ENCODE measurements at regions of chr7 and their contacts with region 1.

Region 1: DNA sequence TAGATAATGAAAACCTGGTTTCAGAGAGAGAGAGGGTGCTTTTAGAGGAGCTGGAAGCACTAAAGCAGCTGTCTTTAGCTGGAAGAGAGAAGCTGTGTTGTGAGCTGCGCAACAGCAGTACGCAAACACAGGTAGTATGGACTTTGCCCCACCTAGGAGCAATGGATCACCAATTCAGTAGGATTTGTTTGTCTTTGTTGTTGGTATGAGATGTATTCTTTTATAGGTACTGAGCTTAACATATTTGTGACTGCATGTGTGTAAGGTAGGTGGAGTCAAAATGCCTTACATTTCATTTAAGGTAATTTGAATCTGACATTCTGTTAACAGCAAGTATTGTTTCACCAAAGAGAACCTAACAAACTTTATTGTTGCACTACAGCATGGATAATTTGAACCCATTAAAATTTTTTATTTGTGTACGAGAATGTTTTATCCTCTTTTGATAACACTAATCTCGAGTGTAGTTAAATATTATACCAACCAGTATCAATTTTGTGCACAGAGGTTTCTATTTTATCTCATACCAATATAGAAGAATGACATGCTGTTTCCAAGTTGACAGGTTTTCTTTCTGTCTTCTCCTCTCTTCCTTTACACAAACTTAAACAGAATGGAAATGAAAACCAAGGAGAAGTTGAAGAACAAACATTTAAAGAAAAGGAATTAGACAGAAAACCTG is 92.1 kb downstream of the CYP51A1 start:
- DNase-seq: no peak
- ATAC-seq: no peak
- H3K4me3 ChIP-seq: no peak overlapping the region
- H3K4me3 Mint-ChIP-seq: no peak overlapping the region
- H3K27ac ChIP-seq: no peak overlapping the region
- H3K27ac Mint-ChIP-seq: no peak overlapping the region
- H3K4me1 ChIP-seq: no peaks in the 10 kb centered on the region
- H3K4me1 Mint-ChIP-seq: no peaks in the 10 kb centered on the region
- H3K27me3 ChIP-seq: no peaks in the 10 kb centered on the region
- H3K27me3 Mint-ChIP-seq: no peaks in the 10 kb centered on the region
- CTCF ChIP-seq: no peak

Region 2: DNA sequence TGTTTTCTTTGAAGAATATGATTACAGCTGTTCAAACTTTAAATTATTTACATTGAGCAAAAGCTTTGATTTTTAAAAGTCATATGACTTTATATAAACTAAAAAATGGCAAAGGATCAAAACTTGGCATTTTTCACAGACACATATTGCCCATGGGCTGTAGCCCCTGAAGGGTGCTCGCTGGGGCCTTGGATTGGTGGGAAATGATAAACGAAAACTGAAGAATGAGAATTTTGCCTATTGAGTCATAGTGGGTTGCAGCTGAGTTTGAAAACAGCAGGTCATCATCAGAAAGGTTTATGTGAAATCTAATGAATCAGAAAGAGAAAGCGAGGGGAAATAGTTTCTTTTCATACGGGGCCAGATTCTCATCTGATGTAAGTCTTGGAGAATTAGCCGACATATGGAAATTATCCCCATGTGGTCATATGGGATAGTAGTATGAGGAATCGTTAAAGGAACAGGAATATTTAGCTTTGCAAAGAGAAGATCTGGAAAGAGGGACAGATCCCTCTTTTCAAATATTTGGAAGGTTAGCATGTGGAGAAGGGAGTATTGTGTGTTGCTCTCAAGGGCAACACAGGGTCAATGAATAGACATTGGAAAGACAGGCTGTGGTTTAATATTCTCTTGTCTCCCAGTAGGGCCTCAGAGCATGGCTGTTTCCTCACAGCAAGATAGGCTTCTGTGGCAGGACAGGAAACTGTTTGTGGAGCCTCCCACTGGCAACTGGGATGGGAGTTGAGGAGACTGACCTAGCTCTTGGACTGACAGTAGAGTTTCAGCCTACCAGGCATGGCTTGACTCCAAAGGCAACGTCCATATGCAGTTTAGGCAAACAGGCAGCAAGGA is 658.9 kb before region 1 on chr7:
- CTCF ChIA-PET with region 1: no interaction called
- POLR2A ChIA-PET with region 1: no interaction called
- intact Hi-C with region 1: loop called (anchors 5 kb)
- DNase-seq: no peak
- ATAC-seq: no peak
- H3K4me3 ChIP-seq: no peak overlapping the region
- H3K4me3 Mint-ChIP-seq: no peak overlapping the region
- H3K27ac ChIP-seq: no peak overlapping the region
- H3K27ac Mint-ChIP-seq: no peak overlapping the region
- H3K4me1 ChIP-seq: no peaks in the 10 kb centered on the region
- H3K4me1 Mint-ChIP-seq: no peaks in the 10 kb centered on the region
- H3K27me3 ChIP-seq: no peaks in the 10 kb centered on the region
- H3K27me3 Mint-ChIP-seq: no peaks in the 10 kb centered on the region
- CTCF ChIP-seq: no peak

Region 3: DNA sequence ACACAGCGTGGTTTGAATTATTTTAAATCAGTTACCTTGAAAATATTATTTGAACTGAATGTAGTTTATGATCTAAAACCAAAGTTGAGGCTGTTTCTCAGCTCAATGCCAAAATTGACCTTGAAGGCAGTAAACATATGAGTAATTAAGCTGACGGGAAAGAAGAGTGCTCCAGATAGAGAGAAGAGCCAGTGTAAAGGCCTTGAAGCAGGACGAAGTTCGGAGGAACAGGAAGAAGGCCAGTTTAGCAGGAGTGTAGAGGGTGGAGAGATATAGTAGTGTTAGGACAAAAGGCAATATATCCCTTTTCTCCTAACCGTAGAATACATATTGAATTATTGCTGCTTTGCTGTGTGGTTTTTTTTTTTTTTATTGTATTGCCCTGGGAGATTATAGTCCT is 28.8 kb after region 1 on chr7:
- CTCF ChIA-PET with region 1: no interaction called
- POLR2A ChIA-PET with region 1: no interaction called
- intact Hi-C with region 1: no loop called
- DNase-seq: no peak
- ATAC-seq: no peak
- H3K4me3 ChIP-seq: no peak overlapping the region
- H3K4me3 Mint-ChIP-seq: no peak overlapping the region
- H3K27ac ChIP-seq: no peak overlapping the region
- H3K27ac Mint-ChIP-seq: no peak overlapping the region
- H3K4me1 ChIP-seq: no peaks in the 10 kb centered on the region
- H3K4me1 Mint-ChIP-seq: no peaks in the 10 kb centered on the region
- H3K27me3 ChIP-seq: no peaks in the 10 kb centered on the region
- H3K27me3 Mint-ChIP-seq: no peaks in the 10 kb centered on the region
- CTCF ChIP-seq: no peak